Mammary epithelial cell (primary cell): ENCODE measurements at regions of chr16 and their contacts with region 1.

Region 1: GRCh38 chr16:57600048-57600835 is 28.2 kb upstream of the ADGRG1 start:
- DNase-seq: peak; percentile 45
- H3K4me3 ChIP-seq: no peak overlapping the region
- H3K27ac ChIP-seq: no peak overlapping the region
- H3K4me1 ChIP-seq: peaks cover 6% of the 10 kb centered on the region
- H3K27me3 ChIP-seq: peaks cover 3% of the 10 kb centered on the region
- CTCF ChIP-seq: peak; percentile 93 to 94

Region 2: DNA sequence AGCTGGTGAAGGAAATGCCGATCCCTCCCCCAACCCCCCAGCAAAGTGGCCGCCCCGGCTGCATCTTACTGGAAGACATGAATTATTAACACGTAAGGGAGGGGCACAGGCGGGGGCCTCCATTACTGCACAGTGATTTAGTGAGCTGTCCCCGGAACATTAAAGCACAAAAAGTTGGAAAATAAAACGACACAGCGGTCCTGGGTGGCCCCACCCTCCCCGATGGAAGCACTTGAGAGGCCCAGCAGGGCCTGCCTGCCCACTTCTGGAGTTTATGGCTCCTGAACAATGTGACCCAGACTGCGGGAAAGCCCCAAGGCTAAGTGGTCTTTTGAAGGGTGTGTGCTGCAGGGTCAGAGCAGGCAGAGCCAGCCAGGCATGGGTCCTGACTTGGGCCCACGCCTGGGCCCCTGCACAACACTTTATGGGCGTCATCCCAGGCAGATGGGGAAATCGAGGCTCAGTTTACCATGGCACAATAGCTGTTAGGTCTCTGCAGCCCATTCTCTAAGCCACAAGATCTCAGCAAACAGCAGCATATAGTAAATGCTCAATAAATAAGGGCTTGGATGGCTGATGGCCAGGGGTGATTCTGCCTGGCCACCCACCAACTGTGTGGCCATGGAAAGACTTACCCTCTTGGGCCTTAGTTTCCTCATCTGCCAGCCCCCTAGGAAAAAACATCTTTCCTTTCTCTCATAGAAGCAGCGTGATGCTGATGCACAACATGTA is 86.7 kb before region 1 on chr16:
- CTCF ChIA-PET with region 1: no interaction called
- dilution Hi-C with region 1: no loop called
- in situ Hi-C with region 1: no loop called
- intact Hi-C with region 1: no loop called
- DNase-seq: no peak
- H3K4me3 ChIP-seq: no peak overlapping the region
- H3K27ac ChIP-seq: no peak overlapping the region
- H3K4me1 ChIP-seq: no peaks in the 10 kb centered on the region
- H3K27me3 ChIP-seq: no peaks in the 10 kb centered on the region
- CTCF ChIP-seq: no peak

Region 3: GRCh38 chr16:57619832-57620636 is 19.8 kb after region 1 on chr16:
- CTCF ChIA-PET with region 1: no interaction called
- dilution Hi-C with region 1: no loop called
- in situ Hi-C with region 1: no loop called
- intact Hi-C with region 1: loop called (anchors 2 kb)
- DNase-seq: peak; percentile 91
- H3K4me3 ChIP-seq: peak overlapping the region; percentile 41 to 80 (median 77)
- H3K27ac ChIP-seq: peak overlapping the region; percentile 73
- H3K4me1 ChIP-seq: peaks cover 67% of the 10 kb centered on the region
- H3K27me3 ChIP-seq: no peaks in the 10 kb centered on the region
- CTCF ChIP-seq: peak in 1 of 2 donors; percentile 1

Region 4: DNA sequence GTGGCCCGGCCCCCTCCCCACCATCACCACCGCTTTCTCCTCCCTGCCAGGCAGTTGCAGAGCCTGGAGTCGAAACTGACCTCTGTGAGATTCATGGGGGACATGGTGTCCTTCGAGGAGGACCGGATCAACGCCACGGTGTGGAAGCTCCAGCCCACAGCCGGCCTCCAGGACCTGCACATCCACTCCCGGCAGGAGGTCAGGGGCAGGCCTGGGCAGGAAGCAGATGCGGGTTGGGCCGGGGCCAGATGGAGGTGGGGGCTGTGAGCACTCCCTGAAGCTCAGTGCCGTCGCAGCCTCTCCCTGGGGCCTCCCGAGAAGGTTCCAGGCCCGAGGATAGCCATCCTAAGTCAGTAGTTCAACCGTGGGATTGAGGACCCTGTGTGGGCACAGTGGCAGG is 53.7 kb after region 1 on chr16:
- CTCF ChIA-PET with region 1: no interaction called
- dilution Hi-C with region 1: no loop called
- in situ Hi-C with region 1: loop called in 1 of 2 experiments (anchors 5 kb)
- intact Hi-C with region 1: loop called (anchors 1 kb)
- DNase-seq: peak; percentile 61
- H3K4me3 ChIP-seq: no peak overlapping the region
- H3K27ac ChIP-seq: no peak overlapping the region
- H3K4me1 ChIP-seq: peaks cover 31% of the 10 kb centered on the region
- H3K27me3 ChIP-seq: no peaks in the 10 kb centered on the region
- CTCF ChIP-seq: no peak

Region 5: GRCh38 chr16:57720142-57720575 is 119.9 kb after region 1 on chr16:
- CTCF ChIA-PET with region 1: no interaction called
- dilution Hi-C with region 1: no loop called
- in situ Hi-C with region 1: loop called in 1 of 2 experiments (anchors 25 kb)
- intact Hi-C with region 1: loop called (anchors 1 kb)
- DNase-seq: peak; percentile 39
- H3K4me3 ChIP-seq: no peak overlapping the region
- H3K27ac ChIP-seq: no peak overlapping the region
- H3K4me1 ChIP-seq: no peaks in the 10 kb centered on the region
- H3K27me3 ChIP-seq: peaks cover 3% of the 10 kb centered on the region
- CTCF ChIP-seq: peak; percentile 60 to 68